Naive thymus-derived CD8-positive, alpha-beta T cell (primary cell): ENCODE measurements at regions of chr7 and their contacts with region 1.

Region 1: GRCh38 chr7:45923290-45923689 is 2.2 kb upstream of the IGFBP3 start:
- DNase-seq: peak in 8 of 10 donors; percentile 22 to 44 (median 38)
- ATAC-seq: peak; percentile 29 to 31
- H3K4me3 Mint-ChIP-seq: peak overlapping the region; percentile 56 to 80 (median 69)
- H3K27ac Mint-ChIP-seq: peak overlapping the region in 2 of 10 donors; percentile 63 to 93
- H3K4me1 Mint-ChIP-seq: peaks cover 10 to 32% (median 27%) of the 10 kb centered on the region in 4 donors
- H3K27me3 Mint-ChIP-seq: peaks cover 12 to 56% (median 39%) of the 10 kb centered on the region in 5 donors

Region 2: GRCh38 chr7:45890902-45891461 is 32.3 kb before region 1 on chr7:
- POLR2A ChIA-PET with region 1: no interaction called
- DNase-seq: peak in 3 of 10 donors; percentile 8 to 22 (median 10)
- ATAC-seq: no peak
- H3K4me3 Mint-ChIP-seq: no peak overlapping the region
- H3K27ac Mint-ChIP-seq: no peak overlapping the region
- H3K4me1 Mint-ChIP-seq: peaks cover 0 to 4% (median 0%) of the 10 kb centered on the region in 4 donors
- H3K27me3 Mint-ChIP-seq: peaks cover 30 to 83% (median 56%) of the 10 kb centered on the region in 5 donors

Region 3: DNA sequence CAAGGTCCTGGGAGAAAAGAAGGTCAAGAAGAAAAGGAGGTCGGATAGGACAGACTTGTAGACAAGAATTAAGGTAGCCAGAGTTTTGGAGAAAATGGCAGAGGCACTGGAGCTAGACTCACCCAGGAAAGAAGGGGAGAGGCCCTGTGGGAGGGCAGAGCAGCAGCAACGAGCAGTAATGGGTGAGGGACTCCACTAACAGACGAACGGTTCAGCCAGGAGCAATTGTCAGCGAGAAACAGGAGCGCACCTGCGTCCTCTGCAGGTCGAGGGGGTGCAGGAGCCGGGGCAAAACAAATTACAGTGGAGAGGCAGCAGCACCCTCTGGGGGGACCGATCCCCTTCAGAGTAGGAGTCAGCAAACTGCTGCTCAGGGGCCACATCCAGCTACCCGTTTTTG is 16.3 kb after region 1 on chr7:
- POLR2A ChIA-PET with region 1: interaction called, 11 read pairs
- DNase-seq: no peak
- ATAC-seq: no peak
- H3K4me3 Mint-ChIP-seq: peak overlapping the region; percentile 24 to 92 (median 60)
- H3K27ac Mint-ChIP-seq: peak overlapping the region in 4 of 10 donors; percentile 68 to 88 (median 78)
- H3K4me1 Mint-ChIP-seq: peaks cover 10 to 44% (median 19%) of the 10 kb centered on the region in 4 donors
- H3K27me3 Mint-ChIP-seq: peaks cover 6 to 14% (median 11%) of the 10 kb centered on the region in 5 donors

Region 4: DNA sequence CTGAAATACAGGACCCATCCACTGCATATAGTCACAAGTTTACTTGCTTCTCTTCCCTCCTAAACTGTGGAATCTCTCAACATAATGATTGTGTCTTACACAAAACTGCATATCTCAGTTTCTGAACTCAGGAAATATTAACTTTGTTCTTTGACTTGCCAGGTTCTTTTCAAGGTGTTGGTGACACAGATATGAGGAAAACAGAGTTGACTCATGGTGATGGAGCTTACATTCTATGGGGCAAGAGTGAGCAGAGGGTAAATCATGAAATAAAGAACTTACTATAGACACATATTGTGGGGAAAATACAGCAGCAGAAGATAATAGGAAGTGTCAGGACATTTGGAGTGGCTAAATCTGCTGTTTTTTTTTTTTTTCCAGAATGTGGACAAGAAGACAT is 70.3 kb after region 1 on chr7:
- POLR2A ChIA-PET with region 1: no interaction called
- DNase-seq: no peak
- ATAC-seq: no peak
- H3K4me3 Mint-ChIP-seq: no peak overlapping the region
- H3K27ac Mint-ChIP-seq: no peak overlapping the region
- H3K4me1 Mint-ChIP-seq: no peaks in the 10 kb centered on the region
- H3K27me3 Mint-ChIP-seq: peaks cover 0 to 3% (median 0%) of the 10 kb centered on the region in 5 donors